ENCODE measurements at regions of chr19 and their contacts with region 1.

Region 1: GRCh38 chr19:55418185-55418584 is 10.6 kb upstream of the UBE2S start:
- DNase-seq: peak; percentile 71
- CTCF ChIP-seq: peak; percentile 71

Region 2: DNA sequence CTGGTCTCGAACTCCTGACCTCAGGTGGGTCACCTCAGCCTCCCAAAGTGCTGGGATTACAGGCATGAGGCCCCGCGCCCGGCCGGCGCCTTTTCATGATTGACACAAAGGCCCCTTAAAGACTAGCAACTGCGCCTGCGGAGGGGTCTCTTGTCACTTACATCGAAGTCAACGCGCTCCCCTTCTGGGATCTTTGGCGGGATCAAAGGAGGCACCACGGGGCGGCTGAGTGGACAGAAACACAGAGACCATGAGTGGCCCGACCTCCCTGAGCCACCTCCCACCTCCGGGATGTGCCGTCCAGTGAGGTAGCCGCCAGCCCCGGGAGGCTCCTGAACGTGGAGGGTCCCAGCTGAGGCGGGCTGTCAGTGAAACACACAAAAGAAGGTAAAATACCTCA is 276.5 kb before region 1 on chr19:
- CTCF ChIA-PET with region 1: interaction called, 28 read pairs
- POLR2A ChIA-PET with region 1: no interaction called
- DNase-seq: no peak
- CTCF ChIP-seq: no peak

Region 3: GRCh38 chr19:55253842-55254624 is 164.2 kb before region 1 on chr19:
- CTCF ChIA-PET with region 1: interaction called, 12 read pairs
- POLR2A ChIA-PET with region 1: no interaction called
- DNase-seq: peak; percentile 79
- CTCF ChIP-seq: no peak

Region 4: DNA sequence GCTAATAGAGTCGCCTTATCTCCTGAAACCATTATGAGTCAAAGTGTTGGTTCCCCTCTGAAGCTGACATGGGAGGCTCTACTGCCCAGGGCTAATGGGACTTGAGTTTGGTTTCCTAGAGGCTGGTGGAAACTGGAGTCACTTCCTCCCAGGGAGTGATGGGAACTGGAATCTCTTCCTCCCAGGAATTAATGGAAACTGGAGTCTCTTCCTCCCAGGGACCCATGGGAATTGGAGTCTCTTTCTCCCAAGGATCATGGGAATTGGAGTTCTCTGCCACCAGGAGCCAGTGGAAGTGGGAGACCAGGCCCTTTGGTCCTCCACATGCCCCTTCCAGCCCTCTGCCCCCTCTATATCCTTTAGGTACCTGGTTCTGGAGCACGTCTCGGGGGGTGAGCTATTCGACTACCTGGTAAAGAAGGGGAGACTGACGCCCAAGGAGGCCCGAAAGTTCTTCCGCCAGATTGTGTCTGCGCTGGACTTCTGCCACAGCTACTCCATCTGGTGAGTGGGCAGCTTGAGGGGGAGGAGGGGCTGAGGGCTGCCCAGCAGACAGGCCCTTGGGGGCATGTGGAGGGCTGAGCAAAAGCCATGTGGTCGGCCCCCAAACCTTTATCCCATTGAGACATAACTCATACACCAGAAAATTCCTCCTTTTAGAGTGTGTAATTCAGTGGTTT is 128.9 kb before region 1 on chr19:
- CTCF ChIA-PET with region 1: interaction called, 24 read pairs
- POLR2A ChIA-PET with region 1: no interaction called
- DNase-seq: no peak
- CTCF ChIP-seq: no peak

Region 5: DNA sequence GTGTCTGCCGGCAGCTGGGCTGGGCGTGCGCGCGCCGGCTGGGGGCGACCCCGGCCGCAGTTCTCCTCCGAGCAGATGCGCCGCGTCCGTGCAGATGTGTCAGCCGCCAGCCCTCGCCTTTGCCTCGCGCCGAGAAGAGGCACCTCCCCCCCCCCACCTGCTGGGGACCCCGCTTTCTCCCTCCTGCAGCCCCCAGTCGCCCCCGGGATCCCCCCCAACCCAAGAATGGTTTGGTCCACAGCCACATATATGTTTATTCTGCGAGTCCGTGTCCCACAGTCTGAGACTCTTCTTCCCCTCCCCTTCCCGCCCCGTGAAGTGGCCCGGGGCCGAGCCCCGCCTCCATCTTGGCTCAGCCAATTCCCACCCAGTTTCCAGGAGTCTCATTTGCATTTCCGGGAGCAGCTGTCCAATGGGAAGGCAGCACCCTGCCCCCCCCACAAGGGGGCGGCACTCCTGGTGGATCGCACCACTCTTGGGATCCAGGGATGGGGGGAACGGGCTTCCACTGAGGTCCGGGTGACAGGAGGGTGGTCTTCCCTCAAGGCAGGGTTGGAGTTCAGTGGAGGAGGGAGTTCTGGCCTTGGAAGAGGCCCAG is 34.7 kb after region 1 on chr19:
- CTCF ChIA-PET with region 1: no interaction called
- POLR2A ChIA-PET with region 1: no interaction called
- DNase-seq: no peak
- CTCF ChIP-seq: no peak